Activated CD8-positive, alpha-beta T cell treated with anti-CD3 and anti-CD28 coated beads, Interleukin-2, amount 10 ng/mL, durations not matched to agents 7 days and 5 days (primary cell): ENCODE measurements at regions of chr17 and their contacts with region 1.

Region 1: DNA sequence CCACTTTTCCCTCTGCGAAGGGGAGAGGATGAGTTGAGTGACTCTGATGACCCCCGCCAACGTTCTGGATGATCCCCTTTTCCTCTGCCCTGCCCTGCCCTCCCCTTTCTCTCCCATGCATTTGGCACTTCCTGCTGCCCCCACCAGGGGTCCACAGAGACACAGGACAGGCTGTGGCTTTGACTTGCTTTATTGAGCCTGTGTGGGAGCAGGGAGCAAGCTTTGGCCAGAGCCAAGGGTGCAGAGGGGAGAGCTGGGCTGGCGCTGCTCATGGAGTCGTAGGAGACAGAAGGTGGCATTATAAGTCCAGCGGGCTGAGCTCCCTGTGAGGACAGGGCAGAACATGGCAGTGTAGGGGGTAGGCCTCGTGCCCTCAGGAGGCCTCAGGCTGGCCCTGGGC is 1.6 kb downstream of the PPY start:
- DNase-seq: peak; percentile 37
- ATAC-seq: no peak
- H3K4me3 Mint-ChIP-seq: no peak overlapping the region
- H3K27ac Mint-ChIP-seq: no peak overlapping the region
- H3K4me1 Mint-ChIP-seq: peaks cover 11% of the 10 kb centered on the region
- H3K27me3 Mint-ChIP-seq: peaks cover 19% of the 10 kb centered on the region

Region 2: DNA sequence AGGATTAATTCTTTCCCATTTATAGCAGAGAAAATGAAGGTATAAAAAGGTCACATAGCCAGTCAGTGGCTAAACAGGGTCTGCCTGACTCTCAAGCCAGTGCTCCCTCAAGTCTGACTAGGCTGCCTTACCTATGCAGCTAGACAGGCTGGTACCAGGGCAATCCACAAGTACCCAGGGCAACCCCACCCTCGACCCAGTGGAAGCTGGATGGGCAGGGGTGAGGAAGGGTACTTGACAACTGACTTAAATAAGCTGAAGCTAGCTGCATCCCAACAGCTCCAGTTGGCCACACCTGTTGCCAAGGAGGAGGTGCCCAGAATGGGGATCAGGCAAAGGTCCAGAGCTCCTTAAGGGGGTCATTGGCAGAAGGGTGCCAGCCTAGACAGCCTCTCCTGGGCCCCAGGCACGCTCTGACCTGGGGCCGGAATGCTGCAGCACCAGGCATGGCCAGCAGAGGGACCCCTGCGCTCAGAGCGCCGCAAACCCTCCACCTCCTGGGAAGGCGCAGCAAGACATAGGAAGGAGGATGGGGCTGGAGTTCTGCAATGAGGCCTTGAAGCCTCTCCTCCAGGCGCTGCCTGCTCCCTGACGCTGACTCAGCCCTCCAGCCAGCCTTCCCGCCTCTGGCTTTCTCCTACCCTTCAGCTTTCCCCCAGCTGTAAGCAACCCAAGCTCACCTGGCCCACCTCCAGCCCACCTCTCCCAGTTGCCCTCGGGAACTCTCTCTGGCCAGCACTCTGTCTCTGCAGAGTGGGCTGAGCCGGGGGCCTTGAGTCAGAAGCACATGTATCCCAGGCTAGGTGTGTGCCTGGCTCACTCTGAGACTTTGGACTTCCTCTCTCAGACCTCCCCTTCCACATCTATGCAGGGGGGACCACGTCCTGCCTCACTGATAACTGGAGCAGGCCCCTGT is 62.1 kb before region 1 on chr17:
- CTCF ChIA-PET with region 1: interaction called, 15 read pairs
- POLR2A ChIA-PET with region 1: no interaction called
- DNase-seq: peak; percentile 70
- ATAC-seq: peak; percentile 83
- H3K4me3 Mint-ChIP-seq: no peak overlapping the region
- H3K27ac Mint-ChIP-seq: no peak overlapping the region
- H3K4me1 Mint-ChIP-seq: peaks cover 2% of the 10 kb centered on the region
- H3K27me3 Mint-ChIP-seq: peaks cover 2% of the 10 kb centered on the region

Region 3: GRCh38 chr17:43927060-43927864 is 13.4 kb before region 1 on chr17:
- CTCF ChIA-PET with region 1: interaction called, 20 read pairs
- POLR2A ChIA-PET with region 1: no interaction called
- DNase-seq: no peak
- ATAC-seq: no peak
- H3K4me3 Mint-ChIP-seq: peak overlapping the region; percentile 60
- H3K27ac Mint-ChIP-seq: peak overlapping the region; percentile 76
- H3K4me1 Mint-ChIP-seq: peaks cover 33% of the 10 kb centered on the region
- H3K27me3 Mint-ChIP-seq: peaks cover 12% of the 10 kb centered on the region

Region 4: DNA sequence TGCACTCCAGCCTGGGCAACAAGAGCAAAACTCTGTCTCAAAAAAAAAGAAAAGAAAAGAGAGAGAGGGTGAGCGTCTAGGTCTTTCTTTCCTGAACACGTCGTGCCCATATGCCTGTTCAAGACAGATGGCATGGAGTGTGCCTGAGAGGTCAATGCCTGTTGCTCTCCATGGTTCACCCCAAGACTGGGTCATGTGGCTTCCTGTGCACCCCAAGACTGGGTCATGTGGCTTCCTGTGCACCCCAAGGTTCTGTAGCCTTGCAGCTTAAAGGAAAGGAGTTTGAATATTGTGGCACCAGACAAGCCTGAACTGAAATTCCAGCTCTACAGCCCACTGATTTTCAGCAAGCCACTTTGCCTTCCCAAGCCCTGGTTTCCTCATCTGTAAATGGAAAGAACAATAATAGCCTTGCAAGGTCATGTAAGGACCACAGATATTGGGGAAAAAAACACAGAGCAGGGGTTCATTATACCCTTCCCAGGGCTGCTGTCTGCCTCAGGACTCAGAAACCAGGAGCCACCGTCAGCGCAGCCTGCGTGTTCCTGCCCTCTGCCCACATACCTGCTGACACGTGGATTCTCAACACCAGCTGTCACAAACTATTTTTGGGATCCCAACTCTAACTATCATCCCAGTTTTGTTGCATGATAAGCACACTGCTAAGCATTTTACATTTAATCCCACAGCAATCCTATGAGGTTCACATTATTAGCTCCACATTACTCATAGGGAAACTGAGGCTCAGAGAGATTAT is 45.8 kb after region 1 on chr17:
- CTCF ChIA-PET with region 1: interaction called, 12 read pairs
- POLR2A ChIA-PET with region 1: interaction called, 3 read pairs
- DNase-seq: no peak
- ATAC-seq: no peak
- H3K4me3 Mint-ChIP-seq: no peak overlapping the region
- H3K27ac Mint-ChIP-seq: no peak overlapping the region
- H3K4me1 Mint-ChIP-seq: peaks cover 14% of the 10 kb centered on the region
- H3K27me3 Mint-ChIP-seq: peaks cover 44% of the 10 kb centered on the region

Region 5: GRCh38 chr17:44004077-44004760 is 63.6 kb after region 1 on chr17 and contains the start of gene NAGS:
- CTCF ChIA-PET with region 1: interaction called, 10 read pairs
- POLR2A ChIA-PET with region 1: no interaction called
- DNase-seq: peak; percentile 28
- ATAC-seq: no peak
- H3K4me3 Mint-ChIP-seq: no peak within 1 kb of the TSS
- H3K27ac Mint-ChIP-seq: no peak within 1 kb of the TSS
- H3K4me1 Mint-ChIP-seq: peaks cover 32% of the 10 kb centered on the region
- H3K27me3 Mint-ChIP-seq: peaks cover 22% of the 10 kb centered on the region
- total RNA-seq, gene NAGS: 0.68 to 0.78 TPM